ENCODE measurements at regions of chr1 and their contacts with region 1.

Region 1: GRCh38 chr1:91282695-91283420 is 121.8 kb downstream of the HFM1 start:
- DNase-seq: peak; percentile 62 to 68
- H3K4me3 ChIP-seq: no peak overlapping the region
- H3K27ac ChIP-seq: no peak overlapping the region
- H3K4me1 ChIP-seq: no peaks in the 10 kb centered on the region
- H3K27me3 ChIP-seq: no peaks in the 10 kb centered on the region
- CTCF ChIP-seq: peak; percentile 31 to 85 (median 80)
- POLR2A ChIP-seq: no peak

Region 2: GRCh38 chr1:91325461-91325860 is 42.6 kb after region 1 on chr1:
- intact Hi-C with region 1: no loop called
- DNase-seq: no peak
- H3K4me3 ChIP-seq: no peak overlapping the region
- H3K27ac ChIP-seq: no peak overlapping the region
- H3K4me1 ChIP-seq: no peaks in the 10 kb centered on the region
- H3K27me3 ChIP-seq: no peaks in the 10 kb centered on the region
- CTCF ChIP-seq: no peak
- POLR2A ChIP-seq: no peak

Region 3: GRCh38 chr1:91404151-91405012 is 121.5 kb after region 1 on chr1 and contains the start of gene HFM1:
- intact Hi-C with region 1: loop called (anchors 10 kb)
- DNase-seq: peak; percentile 87 to 89
- H3K4me3 ChIP-seq: peak within 1 kb of the TSS; percentile 14 to 81 (median 47)
- H3K27ac ChIP-seq: peak within 1 kb of the TSS; percentile 74 to 86 (median 75)
- H3K4me1 ChIP-seq: peaks cover 0 to 3% of the 10 kb centered on the region in 2 donors
- H3K27me3 ChIP-seq: no peaks in the 10 kb centered on the region
- CTCF ChIP-seq: peak in 1 of 6 experiments; percentile 16
- POLR2A ChIP-seq: peak in 1 of 2 donors; percentile 86
- total RNA-seq, gene HFM1: 4.9 to 12.1 (median 8.1) TPM

Region 4: GRCh38 chr1:91500756-91501522 is 218.1 kb after region 1 on chr1 and contains the start of gene CDC7:
- intact Hi-C with region 1: loop called (anchors 10 kb)
- DNase-seq: peak; percentile 90
- H3K4me3 ChIP-seq: peak within 1 kb of the TSS; percentile 37 to 59 (median 50)
- H3K27ac ChIP-seq: peak within 1 kb of the TSS; percentile 38 to 88 (median 88)
- H3K4me1 ChIP-seq: peaks cover 6% of the 10 kb centered on the region in 2 donors
- H3K27me3 ChIP-seq: no peaks in the 10 kb centered on the region
- CTCF ChIP-seq: peak in 4 of 6 experiments; percentile 22 to 48 (median 37)
- POLR2A ChIP-seq: peak in 1 of 2 donors; percentile 23
- total RNA-seq, gene CDC7: 1.6 to 2.6 (median 2.2) TPM

Region 5: GRCh38 chr1:91924146-91924545 is 641.3 kb after region 1 on chr1:
- intact Hi-C with region 1: loop called (anchors 10 kb)
- DNase-seq: no peak
- H3K4me3 ChIP-seq: no peak overlapping the region
- H3K27ac ChIP-seq: no peak overlapping the region
- H3K4me1 ChIP-seq: peaks cover 0 to 6% of the 10 kb centered on the region in 2 donors
- H3K27me3 ChIP-seq: no peaks in the 10 kb centered on the region
- CTCF ChIP-seq: no peak
- POLR2A ChIP-seq: no peak